GM13977 (cell line): ENCODE measurements at regions of chr17 and their contacts with region 1.

Region 1: GRCh38 chr17:4886852-4887251 is 12.5 kb upstream of the C17orf107 start:
- DNase-seq: no peak
- CTCF ChIP-seq: no peak

Region 2: GRCh38 chr17:4420692-4421131 is 466.1 kb before region 1 on chr17:
- in situ Hi-C with region 1: no loop called
- DNase-seq: peak; percentile 80
- CTCF ChIP-seq: peak; percentile 77

Region 3: DNA sequence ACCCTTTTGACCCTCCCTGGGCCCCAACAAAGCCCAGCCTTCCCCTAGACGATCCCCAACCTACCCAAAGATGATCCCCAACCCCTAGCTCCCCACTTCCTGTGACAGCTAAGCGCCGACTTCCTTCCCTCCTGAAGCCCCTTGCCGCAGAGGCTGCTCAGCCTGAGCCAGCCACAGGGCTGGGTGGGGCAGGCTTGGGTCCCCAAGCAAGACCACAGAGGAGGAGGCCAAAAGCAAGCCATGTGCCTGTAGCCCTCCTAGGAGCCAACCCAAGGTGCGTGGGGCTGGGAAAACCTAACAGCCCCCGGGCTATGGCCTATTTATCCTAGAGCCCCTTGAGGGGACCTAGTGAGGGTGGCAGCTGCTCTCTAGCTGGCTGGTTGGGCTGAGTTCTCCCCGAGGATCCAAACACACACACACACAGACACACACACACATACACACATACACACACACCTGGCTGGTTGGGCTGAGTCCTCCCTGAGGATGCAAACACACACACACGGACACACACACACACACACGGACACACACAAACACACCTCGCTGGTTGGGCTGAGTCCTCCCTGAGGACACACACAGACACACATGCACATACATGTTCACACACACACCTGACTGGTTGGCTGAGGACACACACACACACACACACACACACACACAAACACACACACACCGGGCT is 171.6 kb before region 1 on chr17:
- in situ Hi-C with region 1: no loop called
- DNase-seq: no peak
- CTCF ChIP-seq: no peak

Region 4: DNA sequence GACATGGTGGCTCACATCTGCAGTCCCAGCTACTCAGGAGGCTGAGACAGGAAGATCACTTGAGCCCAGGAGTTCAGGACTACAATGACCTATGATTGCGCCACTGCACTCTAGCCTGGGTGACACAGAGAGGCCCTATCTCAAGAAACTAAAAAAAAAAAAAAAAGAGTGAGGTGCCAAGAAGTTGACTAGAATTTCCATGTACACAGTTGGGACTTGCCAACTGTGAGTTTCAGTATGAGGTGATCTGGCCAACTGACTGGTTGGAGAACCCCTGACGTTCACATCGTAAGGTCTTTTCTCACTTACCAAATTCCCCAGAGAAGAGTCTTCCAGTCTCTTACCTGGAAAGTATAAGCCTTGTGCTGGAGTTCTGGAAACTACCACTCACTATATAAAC is 158.7 kb before region 1 on chr17:
- in situ Hi-C with region 1: loop called (anchors 5 kb)
- DNase-seq: no peak
- CTCF ChIP-seq: no peak

Region 5: GRCh38 chr17:4939796-4940624 is 53.2 kb after region 1 on chr17 and contains the starts of genes RNF167 and SLC25A11:
- in situ Hi-C with region 1: no loop called
- DNase-seq: peak; percentile 99
- CTCF ChIP-seq: no peak